ENCODE measurements at regions of chr1 and their contacts with region 1.

Region 1: DNA sequence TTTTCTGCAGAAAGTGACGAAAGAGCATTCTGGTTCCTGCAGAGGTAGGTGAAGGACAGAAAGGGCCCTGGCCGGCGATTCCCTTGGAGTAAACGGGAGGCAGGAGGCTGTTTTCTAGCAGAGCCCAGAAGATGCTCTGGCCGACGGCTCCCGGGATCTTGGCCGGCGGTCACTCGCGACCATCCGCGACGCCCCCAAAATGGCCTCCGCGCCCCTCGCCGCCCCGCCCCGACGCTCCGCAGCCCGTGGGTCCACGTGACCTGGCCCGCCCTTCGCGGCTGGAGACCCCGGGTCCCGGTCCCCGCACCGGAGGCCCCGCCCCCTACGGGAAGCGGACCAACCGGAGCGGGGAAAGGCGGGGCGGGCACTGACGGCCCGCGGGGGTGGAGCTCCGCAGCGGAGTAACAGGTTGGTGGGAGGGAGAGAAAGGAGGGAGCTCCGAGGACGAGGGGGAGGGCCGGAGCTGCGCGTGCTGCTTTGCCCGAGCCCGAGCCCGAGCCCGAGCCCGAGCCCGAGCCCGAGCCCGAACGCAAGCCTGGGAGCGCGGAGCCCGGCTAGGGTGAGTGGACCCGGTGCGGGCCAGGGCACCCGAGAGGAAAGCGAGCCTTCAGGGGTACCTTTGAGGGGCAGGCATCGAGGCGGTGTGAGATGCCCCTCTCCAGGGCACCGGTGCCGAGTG is at the start of gene CGN:
- DNase-seq: peak; percentile 81
- H3K4me3 ChIP-seq: peak within 1 kb of the TSS; percentile 86
- H3K27ac ChIP-seq: peak within 1 kb of the TSS; percentile 48
- H3K4me1 ChIP-seq: peaks cover 25% of the 10 kb centered on the region
- H3K27me3 ChIP-seq: peaks cover 37% of the 10 kb centered on the region
- CTCF ChIP-seq: no peak
- total RNA-seq, gene CGN: 0.52 TPM

Region 2: GRCh38 chr1:151443846-151444782 is 67.0 kb before region 1 on chr1:
- intact Hi-C with region 1: no loop called
- DNase-seq: no peak
- H3K4me3 ChIP-seq: no peak overlapping the region
- H3K27ac ChIP-seq: peak overlapping the region; percentile 14
- H3K4me1 ChIP-seq: peaks cover 66% of the 10 kb centered on the region
- H3K27me3 ChIP-seq: no peaks in the 10 kb centered on the region
- CTCF ChIP-seq: peak; percentile 80

Region 3: GRCh38 chr1:151459331-151460046 is 51.6 kb before region 1 on chr1 and contains the start of gene POGZ:
- intact Hi-C with region 1: loop called (anchors 10 kb)
- DNase-seq: peak; percentile 98
- H3K4me3 ChIP-seq: peak within 1 kb of the TSS; percentile 76
- H3K27ac ChIP-seq: peak within 1 kb of the TSS; percentile 96
- H3K4me1 ChIP-seq: peaks cover 42% of the 10 kb centered on the region
- H3K27me3 ChIP-seq: no peaks in the 10 kb centered on the region
- CTCF ChIP-seq: no peak
- total RNA-seq, gene POGZ: 37.3 TPM

Measured in left ventricle myocardium inferior (tissue), 1 donor.